ENCODE measurements at regions of chr12 and their contacts with region 1.

Region 1: GRCh38 chr12:123519141-123520001 is 14.1 kb downstream of the RILPL1 start:
- DNase-seq: peak; percentile 94
- H3K4me3 ChIP-seq: peak overlapping the region in 1 of 3 experiments; percentile 0
- H3K27ac ChIP-seq: peak overlapping the region; percentile 69
- H3K4me1 ChIP-seq: peaks cover 17% of the 10 kb centered on the region
- H3K27me3 ChIP-seq: no peaks in the 10 kb centered on the region
- CTCF ChIP-seq: no peak

Region 2: GRCh38 chr12:123436017-123436964 is 83.1 kb before region 1 on chr12 and contains the start of gene RILPL2:
- CTCF ChIA-PET with region 1: no interaction called
- dilution Hi-C with region 1: no loop called
- in situ Hi-C with region 1: no loop called
- intact Hi-C with region 1: loop called (anchors 10 kb)
- DNase-seq: peak; percentile 87
- H3K4me3 ChIP-seq: peak within 1 kb of the TSS; percentile 60 to 74 (median 69)
- H3K27ac ChIP-seq: peak within 1 kb of the TSS; percentile 51
- H3K4me1 ChIP-seq: peaks cover 8% of the 10 kb centered on the region
- H3K27me3 ChIP-seq: no peaks in the 10 kb centered on the region
- CTCF ChIP-seq: no peak
- total RNA-seq, gene RILPL2: 1.7 to 4.1 TPM

Region 3: DNA sequence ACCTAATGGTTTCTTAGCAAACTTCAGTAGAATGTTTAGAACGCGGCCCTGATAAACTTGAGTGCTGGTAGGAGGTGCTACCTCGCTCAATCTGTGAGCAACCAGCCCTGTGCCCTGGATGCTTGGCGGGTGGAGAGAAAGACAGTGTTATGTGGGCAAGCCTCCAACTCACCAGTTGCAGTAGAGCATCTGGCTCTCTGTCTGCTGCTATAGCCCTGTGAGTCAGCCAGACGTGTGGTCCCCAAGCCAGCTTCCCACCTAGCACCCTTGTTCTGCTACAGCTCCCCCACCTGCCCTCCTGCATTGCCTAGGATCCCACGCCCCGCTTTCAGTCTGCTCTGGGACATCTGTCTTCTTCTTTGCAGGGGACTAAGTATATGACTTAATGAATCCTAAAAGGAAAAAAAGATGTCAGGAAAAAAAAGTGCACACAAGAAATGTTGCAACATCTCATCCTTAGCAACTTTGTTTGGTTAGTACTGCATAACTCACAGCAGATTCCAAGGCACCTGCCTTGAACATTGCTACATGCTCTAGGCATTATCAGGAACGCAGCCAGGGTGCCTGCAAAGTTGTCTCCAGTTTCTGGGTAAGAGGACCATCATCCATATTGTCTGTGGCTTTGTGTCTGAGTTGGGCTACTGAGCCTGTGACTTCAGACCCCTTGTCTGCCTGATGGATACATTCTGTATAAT is 47.9 kb before region 1 on chr12:
- CTCF ChIA-PET with region 1: no interaction called
- dilution Hi-C with region 1: loop called (anchors 5 kb)
- in situ Hi-C with region 1: no loop called
- intact Hi-C with region 1: no loop called
- DNase-seq: no peak
- H3K4me3 ChIP-seq: no peak overlapping the region
- H3K27ac ChIP-seq: no peak overlapping the region
- H3K4me1 ChIP-seq: no peaks in the 10 kb centered on the region
- H3K27me3 ChIP-seq: no peaks in the 10 kb centered on the region
- CTCF ChIP-seq: no peak

Region 4: GRCh38 chr12:123533672-123534643 is 14.6 kb after region 1 on chr12 and contains the start of gene RILPL1:
- CTCF ChIA-PET with region 1: interaction called, 5 read pairs
- dilution Hi-C with region 1: no loop called
- in situ Hi-C with region 1: no loop called
- intact Hi-C with region 1: loop called (anchors 1 kb)
- DNase-seq: peak; percentile 29
- H3K4me3 ChIP-seq: peak within 1 kb of the TSS; percentile 52 to 91 (median 87)
- H3K27ac ChIP-seq: peak within 1 kb of the TSS; percentile 15
- H3K4me1 ChIP-seq: peaks cover 10% of the 10 kb centered on the region
- H3K27me3 ChIP-seq: no peaks in the 10 kb centered on the region
- CTCF ChIP-seq: peak in 1 of 2 donors; percentile 36
- total RNA-seq, gene RILPL1: 14.0 to 24.3 TPM

Region 5: GRCh38 chr12:123591702-123592481 is 72.5 kb after region 1 on chr12:
- CTCF ChIA-PET with region 1: no interaction called
- dilution Hi-C with region 1: loop called (anchors 5 kb)
- in situ Hi-C with region 1: no loop called
- intact Hi-C with region 1: no loop called
- DNase-seq: no peak
- H3K4me3 ChIP-seq: no peak overlapping the region
- H3K27ac ChIP-seq: no peak overlapping the region
- H3K4me1 ChIP-seq: no peaks in the 10 kb centered on the region
- H3K27me3 ChIP-seq: no peaks in the 10 kb centered on the region
- CTCF ChIP-seq: no peak

Region 6: DNA sequence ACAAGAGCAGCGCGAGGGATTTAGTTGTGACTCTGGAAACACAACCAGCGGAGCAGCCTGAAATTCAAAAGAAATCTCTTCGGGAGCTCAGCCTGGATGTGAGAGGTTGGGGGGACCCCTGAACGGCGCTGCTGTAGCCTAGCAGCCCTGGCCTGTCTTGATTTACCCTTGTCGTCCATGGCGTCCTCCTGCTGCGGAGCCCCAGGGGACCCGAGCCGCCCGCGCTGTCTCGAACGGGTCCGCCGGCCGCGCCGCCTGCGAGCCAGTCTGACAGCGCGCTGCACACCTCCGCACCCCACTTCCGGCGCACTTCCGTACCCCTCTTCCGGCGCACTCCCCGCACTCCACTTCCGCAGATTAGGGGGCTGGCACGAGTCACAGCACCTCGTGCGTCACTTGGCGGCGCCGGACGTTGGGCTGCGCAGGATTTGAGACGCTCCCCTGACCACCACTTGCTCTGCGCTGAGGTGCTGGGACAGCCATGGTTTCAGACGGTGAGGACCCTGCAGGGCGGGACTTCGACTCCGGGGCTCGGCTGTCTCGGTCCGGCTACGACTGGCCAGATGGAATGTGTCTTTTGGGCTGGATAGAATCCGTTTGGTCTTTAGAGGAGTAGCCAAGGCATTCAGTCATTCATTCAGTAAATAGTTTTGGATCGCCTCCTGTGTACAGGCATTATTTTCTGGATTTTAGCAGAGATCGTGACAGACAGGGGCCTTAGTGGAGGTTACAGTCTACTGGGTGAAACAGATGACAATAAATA is 114.2 kb after region 1 on chr12 and contains the starts of genes EIF2B1 and GTF2H3:
- CTCF ChIA-PET with region 1: no interaction called
- dilution Hi-C with region 1: loop called (anchors 5 kb)
- in situ Hi-C with region 1: no loop called
- intact Hi-C with region 1: no loop called
- DNase-seq: peak; percentile 97
- H3K4me3 ChIP-seq: peak within 1 kb of the TSS; percentile 73 to 90 (median 78)
- H3K27ac ChIP-seq: peak within 1 kb of the TSS; percentile 84
- H3K4me1 ChIP-seq: peaks cover 7% of the 10 kb centered on the region
- H3K27me3 ChIP-seq: no peaks in the 10 kb centered on the region
- CTCF ChIP-seq: no peak
- total RNA-seq, gene EIF2B1: 32.0 to 42.5 TPM
- total RNA-seq, gene GTF2H3: 58.7 to 64.9 TPM